ENCODE measurements at regions of chr12 and their contacts with region 1.

Region 1: DNA sequence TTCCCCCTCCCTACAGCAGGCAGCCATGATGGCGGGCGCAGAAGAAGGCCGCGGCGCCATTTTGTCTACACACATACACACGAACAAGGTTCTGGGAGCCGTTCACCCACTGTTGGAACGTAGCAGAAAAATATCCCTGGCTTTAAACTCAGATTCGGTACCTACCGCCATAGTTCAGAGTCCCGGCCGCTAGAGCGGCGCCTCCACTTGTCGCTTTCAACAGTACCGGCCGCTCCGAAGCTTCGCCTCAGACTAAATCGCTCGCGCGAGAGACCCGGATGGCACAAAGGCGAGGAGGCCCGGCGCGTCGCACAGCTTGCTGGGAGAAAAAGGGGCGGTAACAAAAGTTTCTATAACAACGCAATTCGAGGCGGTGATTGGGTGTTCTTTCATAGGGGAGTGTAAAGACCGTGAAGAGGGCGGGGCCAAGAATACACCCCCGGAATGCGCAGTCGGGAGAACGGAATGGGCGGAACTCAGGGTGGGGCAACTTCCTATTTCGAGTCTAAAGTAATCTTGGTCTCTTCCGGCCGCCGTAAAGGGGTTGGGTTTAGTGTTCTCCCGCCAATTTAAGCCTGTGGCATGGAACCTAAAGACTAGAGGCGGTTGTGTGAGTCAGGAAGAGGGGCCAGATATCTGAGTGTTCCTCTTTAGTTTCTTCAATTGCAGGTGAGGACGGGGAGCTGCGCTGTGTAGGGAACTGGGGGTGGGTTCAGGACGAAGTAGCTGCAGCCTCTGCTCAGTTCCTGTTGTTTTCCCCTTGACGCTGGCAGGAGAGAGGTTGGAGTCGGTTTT is at the starts of genes KNTC1 and RSRC2:
- DNase-seq: peak; percentile 94 to 100 (median 96)
- ATAC-seq: peak; percentile 94
- H3K4me3 ChIP-seq: peak within 1 kb of the TSS; percentile 70 to 72
- H3K4me3 Mint-ChIP-seq: no peak within 1 kb of the TSS
- H3K27ac ChIP-seq: peak within 1 kb of the TSS; percentile 96 to 99
- H3K27ac Mint-ChIP-seq: peak within 1 kb of the TSS; percentile 15
- H3K4me1 ChIP-seq: peaks cover 35% of the 10 kb centered on the region
- H3K4me1 Mint-ChIP-seq: peaks cover 34% of the 10 kb centered on the region
- H3K27me3 ChIP-seq: no peaks in the 10 kb centered on the region
- H3K27me3 Mint-ChIP-seq: no peaks in the 10 kb centered on the region
- CTCF ChIP-seq: no peak
- total RNA-seq, gene KNTC1: 14.1 to 15.1 TPM
- total RNA-seq, gene RSRC2: 325 to 333 TPM

Region 2: GRCh38 chr12:121467115-121467793 is 1059.6 kb before region 1 on chr12:
- CTCF ChIA-PET with region 1: no interaction called
- POLR2A ChIA-PET with region 1: no interaction called
- intact Hi-C with region 1: loop called (anchors 10 kb)
- DNase-seq: peak; percentile 77 to 94 (median 86)
- ATAC-seq: peak; percentile 85
- H3K4me3 ChIP-seq: peak overlapping the region; percentile 49 to 55
- H3K4me3 Mint-ChIP-seq: peak overlapping the region; percentile 68
- H3K27ac ChIP-seq: peak overlapping the region; percentile 44 to 59
- H3K27ac Mint-ChIP-seq: no peak overlapping the region
- H3K4me1 ChIP-seq: peaks cover 26% of the 10 kb centered on the region
- H3K4me1 Mint-ChIP-seq: peaks cover 37% of the 10 kb centered on the region
- H3K27me3 ChIP-seq: no peaks in the 10 kb centered on the region
- H3K27me3 Mint-ChIP-seq: no peaks in the 10 kb centered on the region
- CTCF ChIP-seq: no peak

Region 3: GRCh38 chr12:122265931-122266771 is 260.7 kb before region 1 on chr12 and contains the start of gene VPS33A:
- CTCF ChIA-PET with region 1: no interaction called
- POLR2A ChIA-PET with region 1: no interaction called
- intact Hi-C with region 1: loop called in 1 of 2 experiments (anchors 10 kb)
- DNase-seq: peak; percentile 82 to 97 (median 92)
- ATAC-seq: peak; percentile 72
- H3K4me3 ChIP-seq: peak within 1 kb of the TSS; percentile 89 to 95
- H3K4me3 Mint-ChIP-seq: peak within 1 kb of the TSS; percentile 97
- H3K27ac ChIP-seq: peak within 1 kb of the TSS; percentile 95 to 96
- H3K27ac Mint-ChIP-seq: peak within 1 kb of the TSS; percentile 100
- H3K4me1 ChIP-seq: peaks cover 9% of the 10 kb centered on the region
- H3K4me1 Mint-ChIP-seq: peaks cover 36% of the 10 kb centered on the region
- H3K27me3 ChIP-seq: no peaks in the 10 kb centered on the region
- H3K27me3 Mint-ChIP-seq: no peaks in the 10 kb centered on the region
- CTCF ChIP-seq: no peak
- total RNA-seq, gene VPS33A: 11.6 to 13.1 TPM

Region 4: DNA sequence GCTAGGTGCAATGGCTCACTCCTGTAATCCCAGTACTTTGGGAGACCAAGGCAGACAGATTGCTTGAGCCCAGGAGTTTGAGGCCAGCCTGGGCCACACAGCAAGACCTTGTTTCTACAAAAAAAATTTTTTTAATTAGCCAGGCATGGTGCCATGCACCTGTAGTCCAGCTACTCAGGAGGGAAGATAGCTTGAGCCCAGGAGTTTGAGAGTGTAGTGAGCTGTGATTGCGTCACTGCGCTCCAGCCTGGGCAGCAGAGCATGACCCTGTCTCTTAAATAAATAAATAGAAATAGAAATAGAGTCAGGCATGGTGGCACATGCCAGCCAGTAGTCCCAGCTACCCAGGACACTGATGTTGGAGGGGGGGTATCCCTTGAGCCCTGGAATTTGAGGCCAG is 67.7 kb before region 1 on chr12:
- CTCF ChIA-PET with region 1: no interaction called
- POLR2A ChIA-PET with region 1: no interaction called
- intact Hi-C with region 1: no loop called
- DNase-seq: no peak
- ATAC-seq: no peak
- H3K4me3 ChIP-seq: no peak overlapping the region
- H3K4me3 Mint-ChIP-seq: no peak overlapping the region
- H3K27ac ChIP-seq: no peak overlapping the region
- H3K27ac Mint-ChIP-seq: no peak overlapping the region
- H3K4me1 ChIP-seq: peaks cover 6% of the 10 kb centered on the region
- H3K4me1 Mint-ChIP-seq: peaks cover 4% of the 10 kb centered on the region
- H3K27me3 ChIP-seq: no peaks in the 10 kb centered on the region
- H3K27me3 Mint-ChIP-seq: no peaks in the 10 kb centered on the region
- CTCF ChIP-seq: no peak

Region 5: GRCh38 chr12:122500685-122501488 is 26.0 kb before region 1 on chr12 and contains the start of gene ZCCHC8:
- CTCF ChIA-PET with region 1: interaction called, 7 read pairs
- POLR2A ChIA-PET with region 1: interaction called, 68 read pairs
- intact Hi-C with region 1: loop called (anchors 1 kb)
- DNase-seq: peak; percentile 92 to 98 (median 96)
- ATAC-seq: peak; percentile 92
- H3K4me3 ChIP-seq: peak within 1 kb of the TSS; percentile 74 to 80
- H3K4me3 Mint-ChIP-seq: peak within 1 kb of the TSS; percentile 97
- H3K27ac ChIP-seq: peak within 1 kb of the TSS; percentile 90 to 92
- H3K27ac Mint-ChIP-seq: peak within 1 kb of the TSS; percentile 99
- H3K4me1 ChIP-seq: peaks cover 17% of the 10 kb centered on the region
- H3K4me1 Mint-ChIP-seq: peaks cover 40% of the 10 kb centered on the region
- H3K27me3 ChIP-seq: no peaks in the 10 kb centered on the region
- H3K27me3 Mint-ChIP-seq: no peaks in the 10 kb centered on the region
- CTCF ChIP-seq: no peak
- total RNA-seq, gene ZCCHC8: 53.4 to 55.6 TPM

Region 6: DNA sequence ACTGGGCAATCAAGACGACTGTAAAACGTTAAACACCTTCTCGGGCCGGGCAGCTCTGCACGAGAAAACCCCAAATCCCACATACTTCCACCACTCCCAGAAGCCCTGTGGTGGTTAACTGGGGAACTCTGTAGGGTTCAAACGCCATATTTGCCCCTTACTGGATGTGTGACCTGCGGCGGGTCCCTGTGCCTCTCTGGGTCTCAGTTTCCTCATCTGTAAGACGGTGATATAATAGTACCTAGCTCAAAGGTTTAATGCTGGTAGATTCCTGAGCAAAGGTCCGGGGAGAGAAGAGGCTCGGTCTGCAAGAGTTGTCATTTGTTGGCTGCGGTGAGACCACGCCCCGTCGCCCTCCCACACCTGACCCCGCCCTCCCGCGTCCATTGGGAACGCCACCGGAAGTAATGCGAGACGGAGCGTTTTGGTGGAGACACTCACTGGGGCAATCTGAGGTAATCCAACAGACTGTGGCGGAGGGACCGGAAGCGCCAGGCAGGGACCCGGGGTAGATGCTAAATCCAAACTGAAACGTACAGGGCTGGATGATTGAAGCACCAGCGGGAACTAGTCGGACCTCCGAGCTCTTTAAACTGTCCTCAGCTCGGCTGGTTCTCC is 447.5 kb after region 1 on chr12:
- CTCF ChIA-PET with region 1: no interaction called
- POLR2A ChIA-PET with region 1: no interaction called
- intact Hi-C with region 1: loop called in 1 of 2 experiments (anchors 2 kb)
- DNase-seq: peak; percentile 97 to 100 (median 99)
- ATAC-seq: peak; percentile 85
- H3K4me3 ChIP-seq: peak overlapping the region; percentile 91 to 93
- H3K4me3 Mint-ChIP-seq: peak overlapping the region; percentile 98
- H3K27ac ChIP-seq: peak overlapping the region; percentile 93 to 97
- H3K27ac Mint-ChIP-seq: peak overlapping the region; percentile 98
- H3K4me1 ChIP-seq: peaks cover 26% of the 10 kb centered on the region
- H3K4me1 Mint-ChIP-seq: peaks cover 31% of the 10 kb centered on the region
- H3K27me3 ChIP-seq: no peaks in the 10 kb centered on the region
- H3K27me3 Mint-ChIP-seq: no peaks in the 10 kb centered on the region
- CTCF ChIP-seq: no peak

Measured in CD8-positive, alpha-beta T cell (primary cell).